ENCODE measurements at regions of chr19 and their contacts with region 1.

Region 1: DNA sequence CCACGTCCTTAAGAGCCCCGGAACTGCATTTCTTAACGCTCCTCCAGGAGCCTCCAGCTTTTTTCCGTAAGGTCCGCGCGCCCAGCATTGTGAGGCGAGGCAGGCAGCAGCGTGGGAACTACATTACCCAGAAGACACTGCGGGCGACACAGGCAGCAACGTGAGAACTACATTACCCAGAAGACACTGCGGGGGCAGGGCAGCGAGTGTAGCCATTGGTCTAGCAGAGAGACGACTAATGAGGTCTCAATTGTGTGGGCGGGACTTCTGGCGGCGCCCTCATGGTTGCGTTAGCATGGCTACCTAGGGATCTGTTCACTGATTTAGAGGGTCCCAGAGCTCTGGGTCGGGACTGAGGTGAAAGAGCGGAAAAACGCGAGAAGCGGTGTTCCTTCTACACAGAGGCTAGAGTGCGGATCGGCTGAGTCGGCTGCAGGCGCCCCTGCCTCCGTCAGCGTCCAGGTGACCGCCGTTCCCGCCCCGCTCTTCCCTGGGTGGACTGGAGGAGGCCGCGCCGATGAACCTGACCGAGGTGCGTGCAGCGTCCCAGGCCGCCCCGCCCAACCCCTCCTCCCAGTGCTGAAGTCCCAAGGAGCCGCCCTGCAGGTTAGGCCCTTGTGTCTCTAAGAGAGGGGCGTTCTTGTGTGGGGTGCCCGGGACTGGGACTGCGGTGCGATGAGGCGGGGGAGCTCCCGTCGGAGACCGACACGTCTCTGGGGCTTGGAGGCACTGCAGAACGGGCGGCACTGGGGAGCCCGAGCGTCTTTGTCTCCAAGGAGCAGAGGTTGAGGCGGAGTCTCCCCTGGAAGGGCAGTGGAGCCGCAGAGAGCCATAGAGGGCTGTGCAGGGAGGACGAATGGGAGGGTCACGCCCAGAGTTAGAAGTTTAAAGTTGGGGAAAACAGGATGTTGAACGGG is at the start of gene ZNF749:
- DNase-seq: peak; percentile 76 to 100 (median 96)
- ATAC-seq: peak; percentile 100
- H3K4me3 ChIP-seq: peak within 1 kb of the TSS; percentile 75
- H3K4me3 Mint-ChIP-seq: peak within 1 kb of the TSS; percentile 92 to 100 (median 98)
- H3K27ac ChIP-seq: peak within 1 kb of the TSS; percentile 77
- H3K27ac Mint-ChIP-seq: peak within 1 kb of the TSS; percentile 79 to 98 (median 95)
- H3K4me1 ChIP-seq: peaks cover 7 to 14% of the 10 kb centered on the region in 2 donors
- H3K4me1 Mint-ChIP-seq: peaks cover 23 to 42% (median 38%) of the 10 kb centered on the region in 7 donors
- H3K27me3 ChIP-seq: no peaks in the 10 kb centered on the region
- H3K27me3 Mint-ChIP-seq: no peaks in the 10 kb centered on the region
- total RNA-seq, gene ZNF749: 8.9 to 17.9 (median 13.2) TPM

Region 2: DNA sequence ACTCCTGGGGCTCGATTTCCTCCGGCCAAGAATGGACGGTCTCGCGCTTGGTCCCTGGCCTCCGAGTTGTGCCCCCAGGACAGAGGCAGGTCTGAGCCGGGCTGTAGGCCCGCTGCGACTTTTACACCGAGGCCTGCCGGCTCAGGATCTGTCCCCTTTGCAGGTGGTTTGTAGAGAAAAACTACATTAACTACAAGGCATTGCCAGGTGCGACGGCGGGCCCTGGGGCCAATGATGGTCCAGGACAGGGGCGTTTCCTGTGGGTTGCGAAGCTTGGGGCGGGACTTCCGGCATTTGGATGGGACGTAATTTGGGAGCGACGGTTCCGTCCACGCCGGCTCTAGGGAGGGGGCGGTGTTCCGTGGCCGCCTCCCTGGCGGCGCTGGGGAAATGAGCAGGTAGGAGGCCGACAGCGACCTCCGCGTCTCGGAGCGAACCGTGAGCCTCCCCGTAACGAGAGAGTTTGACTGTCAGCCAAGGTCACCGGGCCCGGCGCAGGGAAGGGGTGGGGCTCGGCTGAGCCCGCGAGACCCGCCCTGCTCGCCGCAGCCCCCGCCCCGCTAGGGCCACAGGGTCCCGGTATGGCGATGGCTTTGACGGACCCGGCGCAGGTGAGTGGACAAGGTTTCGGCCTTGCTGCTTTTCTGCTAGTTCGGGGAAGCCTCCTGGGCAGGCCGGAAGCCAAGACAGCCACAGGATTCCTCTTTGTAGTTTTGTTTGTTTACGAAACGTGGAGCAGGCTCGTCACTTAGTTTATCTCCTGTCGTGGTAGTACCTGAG is 194.8 kb before region 1 on chr19 and contains the start of gene ZNF805:
- CTCF ChIA-PET with region 1: no interaction called
- POLR2A ChIA-PET with region 1: no interaction called
- intact Hi-C with region 1: loop called in 1 of 2 experiments (anchors 1 kb)
- DNase-seq: peak; percentile 82 to 96 (median 93)
- ATAC-seq: peak; percentile 97
- H3K4me3 ChIP-seq: peak within 1 kb of the TSS; percentile 73
- H3K4me3 Mint-ChIP-seq: peak within 1 kb of the TSS; percentile 88 to 97 (median 94)
- H3K27ac ChIP-seq: peak within 1 kb of the TSS; percentile 95
- H3K27ac Mint-ChIP-seq: peak within 1 kb of the TSS; percentile 96 to 99 (median 97)
- H3K4me1 ChIP-seq: peaks cover 19% of the 10 kb centered on the region in 2 donors
- H3K4me1 Mint-ChIP-seq: peaks cover 20 to 44% (median 36%) of the 10 kb centered on the region in 7 donors
- H3K27me3 ChIP-seq: no peaks in the 10 kb centered on the region
- H3K27me3 Mint-ChIP-seq: peaks cover 0 to 3% (median 0%) of the 10 kb centered on the region in 5 donors
- total RNA-seq, gene ZNF805: 12.0 to 26.2 (median 23.7) TPM

Region 3: GRCh38 chr19:57350877-57351805 is 84.2 kb before region 1 on chr19 and contains the start of gene ZNF304:
- CTCF ChIA-PET with region 1: no interaction called
- POLR2A ChIA-PET with region 1: no interaction called
- intact Hi-C with region 1: loop called (anchors 1 kb)
- DNase-seq: peak; percentile 51 to 85 (median 76)
- ATAC-seq: peak; percentile 100
- H3K4me3 ChIP-seq: peak within 1 kb of the TSS; percentile 83
- H3K4me3 Mint-ChIP-seq: peak within 1 kb of the TSS; percentile 93 to 97 (median 96)
- H3K27ac ChIP-seq: peak within 1 kb of the TSS; percentile 77
- H3K27ac Mint-ChIP-seq: peak within 1 kb of the TSS; percentile 80 to 96 (median 92)
- H3K4me1 ChIP-seq: peaks cover 11% of the 10 kb centered on the region in 2 donors
- H3K4me1 Mint-ChIP-seq: peaks cover 28 to 43% (median 32%) of the 10 kb centered on the region in 7 donors
- H3K27me3 ChIP-seq: no peaks in the 10 kb centered on the region
- H3K27me3 Mint-ChIP-seq: peaks cover 0 to 11% (median 7%) of the 10 kb centered on the region in 5 donors
- total RNA-seq, gene ZNF304: 6.0 to 12.5 (median 9.0) TPM

Region 4: GRCh38 chr19:57452307-57452706 is 17.0 kb after region 1 on chr19:
- CTCF ChIA-PET with region 1: no interaction called
- POLR2A ChIA-PET with region 1: no interaction called
- intact Hi-C with region 1: no loop called
- DNase-seq: no peak
- ATAC-seq: no peak
- H3K4me3 ChIP-seq: no peak overlapping the region
- H3K4me3 Mint-ChIP-seq: no peak overlapping the region
- H3K27ac ChIP-seq: no peak overlapping the region
- H3K27ac Mint-ChIP-seq: no peak overlapping the region
- H3K4me1 ChIP-seq: no peaks in the 10 kb centered on the region
- H3K4me1 Mint-ChIP-seq: no peaks in the 10 kb centered on the region
- H3K27me3 ChIP-seq: no peaks in the 10 kb centered on the region
- H3K27me3 Mint-ChIP-seq: no peaks in the 10 kb centered on the region

Region 5: GRCh38 chr19:57477191-57478008 is 42.1 kb after region 1 on chr19 and contains the start of gene ZNF772:
- CTCF ChIA-PET with region 1: no interaction called
- POLR2A ChIA-PET with region 1: no interaction called
- intact Hi-C with region 1: loop called (anchors 1 kb)
- DNase-seq: peak; percentile 55 to 96 (median 88)
- ATAC-seq: peak; percentile 99
- H3K4me3 ChIP-seq: peak within 1 kb of the TSS; percentile 80
- H3K4me3 Mint-ChIP-seq: peak within 1 kb of the TSS; percentile 87 to 95 (median 92)
- H3K27ac ChIP-seq: peak within 1 kb of the TSS; percentile 77
- H3K27ac Mint-ChIP-seq: peak within 1 kb of the TSS; percentile 84 to 96 (median 89)
- H3K4me1 ChIP-seq: peaks cover 5 to 12% of the 10 kb centered on the region in 2 donors
- H3K4me1 Mint-ChIP-seq: peaks cover 10 to 26% (median 19%) of the 10 kb centered on the region in 7 donors
- H3K27me3 ChIP-seq: no peaks in the 10 kb centered on the region
- H3K27me3 Mint-ChIP-seq: peaks cover 0 to 7% (median 0%) of the 10 kb centered on the region in 5 donors
- total RNA-seq, gene ZNF772: 1.5 to 20.5 (median 4.3) TPM

Region 6: GRCh38 chr19:57537953-57538547 is 102.7 kb after region 1 on chr19:
- CTCF ChIA-PET with region 1: no interaction called
- POLR2A ChIA-PET with region 1: no interaction called
- intact Hi-C with region 1: no loop called
- DNase-seq: no peak
- ATAC-seq: no peak
- H3K4me3 ChIP-seq: peak overlapping the region; percentile 8
- H3K4me3 Mint-ChIP-seq: peak overlapping the region in 1 of 10 donors; percentile 43
- H3K27ac ChIP-seq: no peak overlapping the region
- H3K27ac Mint-ChIP-seq: no peak overlapping the region
- H3K4me1 ChIP-seq: no peaks in the 10 kb centered on the region
- H3K4me1 Mint-ChIP-seq: peaks cover 0 to 3% (median 0%) of the 10 kb centered on the region in 7 donors
- H3K27me3 ChIP-seq: no peaks in the 10 kb centered on the region
- H3K27me3 Mint-ChIP-seq: no peaks in the 10 kb centered on the region

Region 7: DNA sequence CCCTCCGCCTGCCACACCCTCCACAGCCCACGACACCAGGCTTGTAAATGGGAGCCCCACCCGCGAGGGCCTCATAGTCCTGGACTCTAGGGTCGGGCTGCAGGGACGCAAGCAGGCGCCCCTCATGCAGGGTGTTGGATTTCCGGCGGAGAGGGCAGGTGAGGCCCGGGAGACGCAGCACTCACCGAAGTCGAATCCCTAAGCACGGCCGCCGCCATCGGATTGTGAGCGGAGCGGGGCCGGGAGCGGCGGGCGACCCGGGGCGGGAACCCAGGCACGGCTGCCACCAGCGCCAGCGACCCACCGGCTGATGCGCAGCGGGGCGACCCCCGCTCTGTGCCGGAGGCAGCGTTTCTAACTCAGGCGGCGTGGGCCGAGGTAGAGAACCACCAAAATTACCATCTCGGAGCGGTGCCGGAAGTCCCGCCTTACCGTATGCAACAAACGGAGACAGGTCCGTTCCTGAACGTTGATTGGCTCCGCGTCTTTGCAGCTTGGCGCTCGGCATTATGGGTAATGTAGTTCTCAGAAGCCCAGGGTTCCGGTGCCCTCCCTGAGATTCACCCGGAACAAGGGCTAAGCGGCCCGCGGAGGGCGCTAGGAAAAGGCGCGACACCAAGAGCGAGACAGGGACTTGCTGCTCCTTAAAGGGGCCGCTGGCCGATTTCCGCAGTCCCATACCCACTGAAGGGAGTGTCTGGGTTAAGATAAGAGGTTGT is 143.3 kb after region 1 on chr19 and contains the start of gene ZNF416:
- CTCF ChIA-PET with region 1: no interaction called
- POLR2A ChIA-PET with region 1: no interaction called
- intact Hi-C with region 1: loop called (anchors 1 to 2 kb)
- DNase-seq: peak; percentile 76 to 98 (median 96)
- ATAC-seq: peak; percentile 99
- H3K4me3 ChIP-seq: peak within 1 kb of the TSS; percentile 73
- H3K4me3 Mint-ChIP-seq: peak within 1 kb of the TSS; percentile 75 to 91 (median 85)
- H3K27ac ChIP-seq: peak within 1 kb of the TSS; percentile 80
- H3K27ac Mint-ChIP-seq: peak within 1 kb of the TSS; percentile 78 to 91 (median 87)
- H3K4me1 ChIP-seq: peaks cover 16 to 20% of the 10 kb centered on the region in 2 donors
- H3K4me1 Mint-ChIP-seq: peaks cover 13 to 35% (median 26%) of the 10 kb centered on the region in 7 donors
- H3K27me3 ChIP-seq: no peaks in the 10 kb centered on the region
- H3K27me3 Mint-ChIP-seq: no peaks in the 10 kb centered on the region
- total RNA-seq, gene ZNF416: 4.4 to 13.8 (median 5.7) TPM

Region 8: GRCh38 chr19:57632987-57633831 is 197.9 kb after region 1 on chr19 and contains the start of gene ZNF211:
- CTCF ChIA-PET with region 1: no interaction called
- POLR2A ChIA-PET with region 1: no interaction called
- intact Hi-C with region 1: loop called in 1 of 2 experiments (anchors 1 kb)
- DNase-seq: peak; percentile 74 to 89 (median 86)
- ATAC-seq: peak; percentile 100
- H3K4me3 ChIP-seq: peak within 1 kb of the TSS; percentile 87
- H3K4me3 Mint-ChIP-seq: peak within 1 kb of the TSS; percentile 87 to 97 (median 94)
- H3K27ac ChIP-seq: peak within 1 kb of the TSS; percentile 90
- H3K27ac Mint-ChIP-seq: peak within 1 kb of the TSS; percentile 81 to 97 (median 89)
- H3K4me1 ChIP-seq: peaks cover 3 to 13% of the 10 kb centered on the region in 2 donors
- H3K4me1 Mint-ChIP-seq: peaks cover 21 to 36% (median 28%) of the 10 kb centered on the region in 7 donors
- H3K27me3 ChIP-seq: no peaks in the 10 kb centered on the region
- H3K27me3 Mint-ChIP-seq: no peaks in the 10 kb centered on the region
- total RNA-seq, gene ZNF211: 18.0 to 56.7 (median 33.7) TPM

Region 9: DNA sequence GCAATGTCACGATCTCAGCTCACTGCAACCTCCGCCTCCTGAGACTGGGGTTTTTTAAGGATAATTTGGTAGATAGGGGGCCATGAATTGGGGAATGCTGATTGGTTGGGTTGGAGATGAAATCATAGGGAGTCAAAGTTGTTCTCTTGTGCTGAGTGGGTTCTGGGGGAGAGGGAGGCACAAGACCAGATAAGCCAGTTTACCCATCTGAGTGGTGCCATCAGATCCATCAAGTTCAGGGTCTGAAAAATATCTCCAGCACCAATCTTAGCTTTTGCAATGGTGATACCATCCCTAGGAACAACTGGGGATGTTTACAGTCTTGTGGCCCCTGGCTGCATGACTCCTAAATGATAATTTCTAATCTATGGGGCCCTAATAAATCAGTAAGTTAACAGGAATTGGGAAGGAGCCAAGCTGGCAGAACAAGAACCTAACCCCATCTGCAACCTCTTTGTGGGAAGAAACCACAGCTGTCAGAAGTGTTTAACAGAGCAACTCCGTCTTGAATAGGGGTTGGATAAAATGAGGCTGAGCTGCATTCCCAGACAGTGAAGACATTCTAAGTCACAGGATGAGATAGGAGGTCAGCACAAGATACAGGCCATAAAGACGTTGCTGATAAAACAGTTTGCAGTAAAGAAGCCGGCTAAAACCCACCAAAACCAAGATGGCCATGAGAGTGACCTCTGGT is 455.2 kb after region 1 on chr19:
- CTCF ChIA-PET with region 1: no interaction called
- POLR2A ChIA-PET with region 1: no interaction called
- intact Hi-C with region 1: no loop called
- DNase-seq: no peak
- ATAC-seq: no peak
- H3K4me3 ChIP-seq: no peak overlapping the region
- H3K4me3 Mint-ChIP-seq: peak overlapping the region in 1 of 10 donors; percentile 39
- H3K27ac ChIP-seq: no peak overlapping the region
- H3K27ac Mint-ChIP-seq: no peak overlapping the region
- H3K4me1 ChIP-seq: no peaks in the 10 kb centered on the region
- H3K4me1 Mint-ChIP-seq: peaks cover 18 to 28% (median 22%) of the 10 kb centered on the region in 7 donors
- H3K27me3 ChIP-seq: no peaks in the 10 kb centered on the region
- H3K27me3 Mint-ChIP-seq: no peaks in the 10 kb centered on the region

Region 10: DNA sequence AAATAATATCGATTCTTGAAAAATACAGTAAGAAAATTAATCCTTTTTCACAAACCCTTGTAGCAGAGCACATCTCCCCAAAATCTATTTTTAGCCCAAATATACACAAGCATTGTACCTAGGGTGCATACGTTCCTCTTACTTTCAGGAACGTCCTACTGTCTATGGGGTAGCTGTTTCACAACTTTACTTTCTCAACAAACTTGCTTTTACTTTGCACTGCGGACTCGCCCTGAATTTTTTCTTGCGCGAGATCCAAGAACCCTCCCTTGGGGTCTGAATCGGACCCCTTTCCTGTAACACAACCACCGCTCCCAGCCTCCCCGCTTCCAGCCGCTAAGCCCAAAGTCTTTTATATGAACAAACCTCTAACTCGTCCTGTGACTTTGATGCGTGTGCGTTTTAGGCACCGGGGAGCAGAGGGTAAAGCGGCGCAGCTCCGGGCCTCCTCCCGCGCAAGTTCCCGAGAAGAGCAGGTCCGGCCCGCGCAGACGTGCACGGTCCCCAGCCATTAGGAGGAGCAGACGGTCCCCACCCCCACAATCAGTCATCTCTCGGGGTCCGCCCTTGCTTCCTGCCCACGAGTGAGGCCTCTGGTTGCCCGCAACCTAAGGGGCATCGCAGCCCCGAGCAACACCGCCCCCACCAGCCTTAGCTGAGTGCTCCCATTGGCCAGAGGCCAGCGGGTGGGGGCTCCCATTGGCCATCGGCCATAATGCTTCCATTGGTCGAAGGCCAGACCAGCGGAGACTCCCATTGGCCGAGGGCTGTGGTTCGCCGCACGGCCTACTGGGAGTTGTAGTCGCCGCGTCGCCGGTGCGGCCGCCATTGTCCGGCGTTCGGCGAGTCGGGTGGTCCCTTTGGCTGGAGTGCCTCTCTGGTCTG is 843.1 kb after region 1 on chr19 and contains the start of gene ZNF8:
- CTCF ChIA-PET with region 1: no interaction called
- POLR2A ChIA-PET with region 1: no interaction called
- intact Hi-C with region 1: loop called in 1 of 2 experiments (anchors 1 kb)
- DNase-seq: peak; percentile 84 to 96 (median 93)
- ATAC-seq: peak; percentile 99
- H3K4me3 ChIP-seq: peak within 1 kb of the TSS; percentile 93
- H3K4me3 Mint-ChIP-seq: peak within 1 kb of the TSS; percentile 89 to 99 (median 95)
- H3K27ac ChIP-seq: peak within 1 kb of the TSS; percentile 80
- H3K27ac Mint-ChIP-seq: peak within 1 kb of the TSS; percentile 88 to 97 (median 96)
- H3K4me1 ChIP-seq: peaks cover 12 to 15% of the 10 kb centered on the region in 2 donors
- H3K4me1 Mint-ChIP-seq: peaks cover 28 to 63% (median 43%) of the 10 kb centered on the region in 7 donors
- H3K27me3 ChIP-seq: no peaks in the 10 kb centered on the region
- H3K27me3 Mint-ChIP-seq: no peaks in the 10 kb centered on the region
- total RNA-seq, gene ZNF8: 5.2 to 10.5 (median 10.0) TPM